ENCODE measurements at regions of chrX and their contacts with region 1.

Region 1: DNA sequence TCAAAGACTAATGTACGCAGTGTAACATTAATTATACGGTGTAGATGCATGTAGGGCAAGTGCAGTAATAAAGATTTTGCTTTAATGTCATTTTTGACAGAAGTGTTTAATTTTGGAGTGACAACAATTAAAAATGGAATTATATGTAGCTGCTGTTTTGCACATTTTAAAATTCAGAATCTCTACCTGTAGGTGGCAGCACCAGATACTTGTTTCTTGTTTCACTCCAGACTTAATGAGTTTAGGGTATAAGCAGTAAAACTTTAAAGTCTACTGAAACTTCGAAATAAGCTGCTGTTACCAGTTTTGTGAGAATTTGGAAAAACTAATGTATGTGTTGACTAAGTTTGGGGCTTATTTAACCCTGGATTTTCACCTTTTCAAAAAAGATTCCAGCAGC is 144.9 kb downstream of the POLA1 start:
- DNase-seq: peak; percentile 50
- ATAC-seq: 0 out of 2 replicates have a peak, but pooled peaks have one; percentile 44
- H3K4me3 ChIP-seq: no peak overlapping the region
- H3K27ac ChIP-seq: no peak overlapping the region
- H3K4me1 ChIP-seq: no peaks in the 10 kb centered on the region
- H3K27me3 ChIP-seq: no peaks in the 10 kb centered on the region
- CTCF ChIP-seq: peak; percentile 57
- POLR2A ChIP-seq: no peak
- RAD21 ChIP-seq: peak; percentile 54

Region 2: GRCh38 chrX:24828147-24828546 is 10.5 kb before region 1 on chrX:
- CTCF ChIA-PET with region 1: interaction called, 19 read pairs
- POLR2A ChIA-PET with region 1: no interaction called
- dilution Hi-C with region 1: no loop called
- in situ Hi-C with region 1: no loop called
- intact Hi-C with region 1: no loop called
- DNase-seq: no peak
- ATAC-seq: no peak
- H3K4me3 ChIP-seq: no peak overlapping the region
- H3K27ac ChIP-seq: no peak overlapping the region
- H3K4me1 ChIP-seq: no peaks in the 10 kb centered on the region
- H3K27me3 ChIP-seq: no peaks in the 10 kb centered on the region
- CTCF ChIP-seq: no peak
- POLR2A ChIP-seq: no peak
- RAD21 ChIP-seq: no peak

Region 3: GRCh38 chrX:25004485-25005032 is 165.9 kb after region 1 on chrX:
- CTCF ChIA-PET with region 1: no interaction called
- POLR2A ChIA-PET with region 1: no interaction called
- dilution Hi-C with region 1: no loop called
- in situ Hi-C with region 1: no loop called
- intact Hi-C with region 1: loop called (anchors 5 kb)
- DNase-seq: no peak
- ATAC-seq: no peak
- H3K4me3 ChIP-seq: peak overlapping the region; percentile 14; the same call in 1 of the 2 replicates
- H3K27ac ChIP-seq: no peak overlapping the region
- H3K4me1 ChIP-seq: no peaks in the 10 kb centered on the region; the same call in 1 of the 2 replicates
- H3K27me3 ChIP-seq: peaks cover 72% of the 10 kb centered on the region
- CTCF ChIP-seq: no peak
- POLR2A ChIP-seq: no peak
- RAD21 ChIP-seq: no peak

Region 4: DNA sequence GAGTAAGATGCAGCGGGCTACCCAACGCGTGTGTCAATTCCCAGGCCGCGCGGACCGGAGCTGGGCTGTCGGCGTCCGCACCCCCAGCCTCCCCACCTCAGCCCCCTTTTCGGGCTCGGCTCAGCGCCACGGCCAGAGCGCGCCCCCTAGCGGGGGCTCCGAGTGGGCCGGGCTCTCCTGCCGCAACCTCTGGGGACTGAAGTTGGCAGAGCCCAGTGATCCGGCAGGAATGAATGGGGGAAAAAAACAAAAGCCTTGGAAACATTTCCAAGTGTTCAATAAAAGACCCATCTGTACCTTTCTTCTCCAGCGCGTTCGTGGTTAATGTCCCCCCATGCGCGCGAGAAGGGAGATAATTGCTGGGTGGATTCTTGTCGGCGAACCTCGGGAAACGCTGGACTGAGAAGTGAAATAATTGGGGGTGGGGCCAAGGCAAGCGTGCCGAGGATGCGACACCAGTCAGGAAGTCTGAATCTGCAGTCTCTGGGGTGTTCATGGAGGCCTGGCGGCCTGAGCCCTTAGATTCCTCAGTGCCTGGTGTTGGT is 182.3 kb after region 1 on chrX:
- CTCF ChIA-PET with region 1: interaction called, 4 read pairs
- POLR2A ChIA-PET with region 1: interaction called, 7 read pairs
- dilution Hi-C with region 1: no loop called
- in situ Hi-C with region 1: no loop called
- intact Hi-C with region 1: loop called (anchors 1 kb)
- DNase-seq: no peak
- ATAC-seq: peak; percentile 32; the same call in 1 of the 2 replicates
- H3K4me3 ChIP-seq: no peak overlapping the region
- H3K27ac ChIP-seq: no peak overlapping the region
- H3K4me1 ChIP-seq: no peaks in the 10 kb centered on the region; the same call in 1 of the 2 replicates
- H3K27me3 ChIP-seq: peaks cover 81% of the 10 kb centered on the region
- CTCF ChIP-seq: peak; percentile 43
- POLR2A ChIP-seq: no peak
- RAD21 ChIP-seq: peak; percentile 36

Measured in IMR-90 (cell line).